B cell (primary cell): ENCODE measurements at regions of chr4 and their contacts with region 1.

Region 1: DNA sequence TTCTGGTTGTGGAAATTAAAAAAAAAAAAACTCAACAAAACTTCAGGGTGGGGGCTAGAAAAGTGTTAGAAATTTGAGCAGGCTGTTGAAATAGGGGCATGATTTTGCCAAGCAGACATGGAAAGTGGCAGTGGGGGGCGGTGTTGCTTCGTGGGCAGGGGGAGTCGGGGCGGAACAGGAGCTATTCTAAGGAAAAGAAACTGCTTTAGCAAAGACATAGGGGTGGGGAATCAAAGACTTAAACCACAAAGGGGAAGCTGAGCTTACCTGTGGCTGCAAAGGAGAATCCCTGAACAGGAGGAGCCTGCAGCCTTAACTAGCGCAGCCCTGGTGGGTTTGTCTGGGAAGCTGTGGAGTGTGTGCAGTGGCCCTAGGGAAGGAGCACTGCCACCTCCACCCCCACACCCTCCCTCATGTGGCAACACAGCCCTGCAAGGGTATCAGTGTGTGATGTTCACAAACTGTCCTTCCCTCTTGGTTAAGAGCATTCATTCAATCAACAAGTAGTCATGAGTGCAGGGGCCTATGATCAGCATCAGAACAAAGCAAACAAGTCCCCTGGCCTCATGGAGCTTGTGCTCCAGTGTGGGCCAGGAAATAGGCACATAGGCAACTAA is 20.5 kb downstream of the SEL1L3 start:
- DNase-seq: peak; percentile 85
- ATAC-seq: peak; percentile 90
- H3K4me3 ChIP-seq: peak overlapping the region in 1 of 5 experiments; percentile 12
- H3K4me3 Mint-ChIP-seq: peak overlapping the region; percentile 38
- H3K27ac ChIP-seq: peak overlapping the region; percentile 13 to 61
- H3K27ac Mint-ChIP-seq: peak overlapping the region; percentile 57
- H3K4me1 ChIP-seq: peaks cover 30 to 53% of the 10 kb centered on the region in 2 donors
- H3K4me1 Mint-ChIP-seq: peaks cover 77% of the 10 kb centered on the region
- H3K27me3 ChIP-seq: no peaks in the 10 kb centered on the region
- H3K27me3 Mint-ChIP-seq: no peaks in the 10 kb centered on the region
- CTCF ChIP-seq: peak; percentile 73

Region 2: GRCh38 chr4:25779016-25779415 is 63.3 kb before region 1 on chr4:
- CTCF ChIA-PET with region 1: no interaction called
- POLR2A ChIA-PET with region 1: no interaction called
- intact Hi-C with region 1: no loop called
- DNase-seq: no peak
- ATAC-seq: no peak
- H3K4me3 ChIP-seq: no peak overlapping the region
- H3K4me3 Mint-ChIP-seq: no peak overlapping the region
- H3K27ac ChIP-seq: no peak overlapping the region
- H3K27ac Mint-ChIP-seq: no peak overlapping the region
- H3K4me1 ChIP-seq: no peaks in the 10 kb centered on the region
- H3K4me1 Mint-ChIP-seq: no peaks in the 10 kb centered on the region
- H3K27me3 ChIP-seq: no peaks in the 10 kb centered on the region
- H3K27me3 Mint-ChIP-seq: no peaks in the 10 kb centered on the region
- CTCF ChIP-seq: no peak

Region 3: GRCh38 chr4:25879991-25880651 is 37.8 kb after region 1 on chr4:
- CTCF ChIA-PET with region 1: interaction called, 3 read pairs
- POLR2A ChIA-PET with region 1: no interaction called
- intact Hi-C with region 1: loop called (anchors 2 kb)
- DNase-seq: peak; percentile 68
- ATAC-seq: peak; percentile 48
- H3K4me3 ChIP-seq: no peak overlapping the region
- H3K4me3 Mint-ChIP-seq: peak overlapping the region; percentile 82
- H3K27ac ChIP-seq: peak overlapping the region; percentile 70 to 71
- H3K27ac Mint-ChIP-seq: peak overlapping the region; percentile 97
- H3K4me1 ChIP-seq: peaks cover 70 to 76% of the 10 kb centered on the region in 2 donors
- H3K4me1 Mint-ChIP-seq: peaks cover 80% of the 10 kb centered on the region
- H3K27me3 ChIP-seq: no peaks in the 10 kb centered on the region
- H3K27me3 Mint-ChIP-seq: no peaks in the 10 kb centered on the region
- CTCF ChIP-seq: no peak

Region 4: GRCh38 chr4:25919676-25920075 is 77.3 kb after region 1 on chr4:
- CTCF ChIA-PET with region 1: interaction called, 49 read pairs
- POLR2A ChIA-PET with region 1: interaction called, 7 read pairs
- intact Hi-C with region 1: loop called (anchors 1 kb)
- DNase-seq: no peak
- ATAC-seq: no peak
- H3K4me3 ChIP-seq: no peak overlapping the region
- H3K4me3 Mint-ChIP-seq: no peak overlapping the region
- H3K27ac ChIP-seq: no peak overlapping the region
- H3K27ac Mint-ChIP-seq: no peak overlapping the region
- H3K4me1 ChIP-seq: peaks cover 6 to 7% of the 10 kb centered on the region in 2 donors
- H3K4me1 Mint-ChIP-seq: peaks cover 10% of the 10 kb centered on the region
- H3K27me3 ChIP-seq: no peaks in the 10 kb centered on the region
- H3K27me3 Mint-ChIP-seq: no peaks in the 10 kb centered on the region
- CTCF ChIP-seq: no peak

Region 5: DNA sequence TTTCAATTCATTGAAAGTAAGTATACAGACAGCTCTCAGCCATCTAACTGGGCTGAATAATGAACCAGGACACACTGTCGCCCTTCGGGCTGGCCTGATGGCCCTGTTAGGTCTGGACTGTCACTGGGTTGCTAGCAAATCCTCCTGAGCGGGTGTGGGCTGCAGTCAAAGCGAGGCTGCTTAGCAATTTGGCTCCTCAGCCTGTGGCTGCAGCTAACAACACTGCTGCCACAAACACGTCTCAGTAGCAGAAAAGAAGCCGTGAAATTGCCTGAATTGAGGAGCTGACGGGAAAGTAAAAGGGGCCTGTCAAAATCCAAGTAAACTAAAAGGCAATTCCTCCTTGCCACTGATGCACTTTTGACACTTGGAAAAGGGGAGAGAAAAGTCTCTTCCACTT is 144.5 kb after region 1 on chr4:
- CTCF ChIA-PET with region 1: interaction called, 38 read pairs
- POLR2A ChIA-PET with region 1: no interaction called
- intact Hi-C with region 1: loop called (anchors 1 kb)
- DNase-seq: no peak
- ATAC-seq: no peak
- H3K4me3 ChIP-seq: no peak overlapping the region
- H3K4me3 Mint-ChIP-seq: no peak overlapping the region
- H3K27ac ChIP-seq: no peak overlapping the region
- H3K27ac Mint-ChIP-seq: no peak overlapping the region
- H3K4me1 ChIP-seq: peaks cover 5 to 21% of the 10 kb centered on the region in 2 donors
- H3K4me1 Mint-ChIP-seq: peaks cover 20% of the 10 kb centered on the region
- H3K27me3 ChIP-seq: peaks cover 0 to 6% (median 0%) of the 10 kb centered on the region in 4 experiments
- H3K27me3 Mint-ChIP-seq: peaks cover 5% of the 10 kb centered on the region
- CTCF ChIP-seq: no peak

Region 6: GRCh38 chr4:26319467-26319948 is 477.2 kb after region 1 on chr4:
- CTCF ChIA-PET with region 1: interaction called, 6 read pairs
- POLR2A ChIA-PET with region 1: interaction called, 3 read pairs
- intact Hi-C with region 1: loop called (anchors 2 kb)
- DNase-seq: peak; percentile 97
- ATAC-seq: peak; percentile 73
- H3K4me3 ChIP-seq: peak overlapping the region; percentile 75 to 91 (median 87)
- H3K4me3 Mint-ChIP-seq: peak overlapping the region; percentile 99
- H3K27ac ChIP-seq: peak overlapping the region; percentile 78 to 89
- H3K27ac Mint-ChIP-seq: peak overlapping the region; percentile 99
- H3K4me1 ChIP-seq: peaks cover 13 to 22% of the 10 kb centered on the region in 2 donors
- H3K4me1 Mint-ChIP-seq: peaks cover 27% of the 10 kb centered on the region
- H3K27me3 ChIP-seq: no peaks in the 10 kb centered on the region
- H3K27me3 Mint-ChIP-seq: no peaks in the 10 kb centered on the region
- CTCF ChIP-seq: no peak